ENCODE measurements at regions of chr1 and their contacts with region 1.

Region 1: DNA sequence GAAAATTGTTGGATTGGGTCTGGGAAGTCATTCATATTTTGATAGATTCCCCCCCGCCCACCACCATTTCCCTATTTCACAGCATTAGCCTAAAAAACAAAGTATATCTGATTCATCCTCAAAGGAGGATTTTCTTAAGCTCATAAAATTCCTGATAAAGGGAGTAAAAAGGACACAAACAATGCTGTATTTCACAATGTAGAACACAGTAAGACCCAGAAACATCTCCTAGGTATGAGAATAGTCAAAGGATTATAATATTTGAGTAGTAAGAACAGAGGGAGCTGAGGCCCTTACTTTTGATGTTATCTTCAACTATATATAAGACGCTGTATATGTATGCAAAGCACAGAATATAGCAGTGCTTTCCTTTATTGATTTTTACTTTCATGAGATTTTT is 225.3 kb downstream of the TGFB2 start:
- DNase-seq: no peak
- H3K4me3 ChIP-seq: no peak overlapping the region
- H3K27me3 ChIP-seq: no peaks in the 10 kb centered on the region
- CTCF ChIP-seq: no peak

Region 2: GRCh38 chr1:218493986-218494852 is 76.2 kb before region 1 on chr1:
- CTCF ChIA-PET with region 1: no interaction called
- POLR2A ChIA-PET with region 1: interaction called, 10 read pairs
- DNase-seq: no peak
- H3K4me3 ChIP-seq: no peak overlapping the region
- H3K27me3 ChIP-seq: no peaks in the 10 kb centered on the region
- CTCF ChIP-seq: no peak

Measured in BJ (cell line).